ENCODE measurements at regions of chr9 and their contacts with region 1.

Region 1: GRCh38 chr9:129835021-129835871 is at the starts of genes C9orf78 and USP20:
- DNase-seq: peak; percentile 95 to 99 (median 98)
- ATAC-seq: peak; percentile 98
- H3K4me3 ChIP-seq: peak within 1 kb of the TSS; percentile 96
- H3K4me3 Mint-ChIP-seq: peak within 1 kb of the TSS; percentile 86 to 99 (median 98)
- H3K27ac ChIP-seq: peak within 1 kb of the TSS; percentile 97
- H3K27ac Mint-ChIP-seq: peak within 1 kb of the TSS; percentile 91 to 99 (median 98)
- H3K4me1 ChIP-seq: peaks cover 36 to 50% of the 10 kb centered on the region in 2 donors
- H3K4me1 Mint-ChIP-seq: peaks cover 41 to 65% (median 57%) of the 10 kb centered on the region in 7 donors
- H3K27me3 ChIP-seq: no peaks in the 10 kb centered on the region
- H3K27me3 Mint-ChIP-seq: no peaks in the 10 kb centered on the region
- total RNA-seq, gene C9orf78: 66.2 to 118 (median 95.8) TPM
- total RNA-seq, gene USP20: 94.9 to 156 (median 118) TPM

Region 2: GRCh38 chr9:128103589-128103962 is 1731.7 kb before region 1 on chr9:
- CTCF ChIA-PET with region 1: no interaction called
- POLR2A ChIA-PET with region 1: no interaction called
- intact Hi-C with region 1: no loop called
- DNase-seq: peak in 7 of 9 donors; percentile 27 to 52 (median 50)
- ATAC-seq: peak; percentile 77
- H3K4me3 ChIP-seq: no peak overlapping the region
- H3K4me3 Mint-ChIP-seq: peak overlapping the region in 7 of 10 donors; percentile 5 to 56 (median 36)
- H3K27ac ChIP-seq: peak overlapping the region; percentile 3
- H3K27ac Mint-ChIP-seq: peak overlapping the region in 8 of 9 donors; percentile 60 to 89 (median 74)
- H3K4me1 ChIP-seq: peaks cover 6 to 41% of the 10 kb centered on the region in 2 donors
- H3K4me1 Mint-ChIP-seq: peaks cover 36 to 68% (median 46%) of the 10 kb centered on the region in 7 donors
- H3K27me3 ChIP-seq: no peaks in the 10 kb centered on the region
- H3K27me3 Mint-ChIP-seq: no peaks in the 10 kb centered on the region

Region 3: GRCh38 chr9:129383561-129384416 is 451.5 kb before region 1 on chr9:
- CTCF ChIA-PET with region 1: no interaction called
- POLR2A ChIA-PET with region 1: no interaction called
- intact Hi-C with region 1: no loop called
- DNase-seq: peak; percentile 60 to 87 (median 79)
- ATAC-seq: peak; percentile 96
- H3K4me3 ChIP-seq: peak overlapping the region; percentile 62
- H3K4me3 Mint-ChIP-seq: peak overlapping the region; percentile 70 to 86 (median 82)
- H3K27ac ChIP-seq: peak overlapping the region; percentile 82
- H3K27ac Mint-ChIP-seq: peak overlapping the region; percentile 72 to 96 (median 92)
- H3K4me1 ChIP-seq: peaks cover 0 to 12% of the 10 kb centered on the region in 2 donors
- H3K4me1 Mint-ChIP-seq: peaks cover 8 to 19% (median 10%) of the 10 kb centered on the region in 7 donors
- H3K27me3 ChIP-seq: no peaks in the 10 kb centered on the region
- H3K27me3 Mint-ChIP-seq: peaks cover 0 to 9% (median 0%) of the 10 kb centered on the region in 5 donors

Region 4: DNA sequence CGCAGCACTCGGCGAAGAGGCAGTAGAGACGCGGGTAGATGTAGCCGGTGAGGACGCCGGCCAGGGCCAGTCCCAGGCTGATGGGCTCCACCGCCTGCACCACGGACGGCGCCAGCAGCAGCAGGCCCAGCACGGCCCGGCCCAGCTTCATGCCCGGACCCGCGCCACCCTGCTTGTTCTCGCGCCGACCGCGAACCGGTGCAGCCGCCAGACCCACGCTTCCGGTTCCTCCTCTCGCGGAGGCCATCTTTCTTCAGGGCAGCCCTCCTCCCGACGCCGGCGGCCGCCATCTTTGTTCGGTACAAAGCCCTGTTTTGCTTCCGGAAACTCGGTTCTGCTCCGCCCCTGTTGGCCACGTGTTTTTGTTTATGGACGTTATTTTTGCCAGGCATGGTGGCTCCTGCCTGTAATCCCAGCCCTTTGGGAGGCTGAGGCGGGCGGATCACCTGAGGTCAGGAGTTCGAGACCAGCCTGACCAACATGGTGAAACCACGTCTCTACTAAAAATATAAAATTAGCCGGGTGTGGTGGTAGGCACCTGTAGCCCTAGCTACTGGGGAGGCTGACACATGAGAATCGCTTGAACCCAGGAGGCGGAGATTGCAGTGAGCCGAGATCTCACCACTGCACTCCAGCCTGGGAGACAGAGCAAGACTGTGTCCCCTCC is 11.2 kb before region 1 on chr9 and contains the start of gene TOR1A:
- CTCF ChIA-PET with region 1: interaction called, 3 read pairs
- POLR2A ChIA-PET with region 1: interaction called, 56 read pairs
- intact Hi-C with region 1: loop called (anchors 1 kb)
- DNase-seq: peak; percentile 76 to 91 (median 89)
- ATAC-seq: peak; percentile 97
- H3K4me3 ChIP-seq: peak within 1 kb of the TSS; percentile 73
- H3K4me3 Mint-ChIP-seq: peak within 1 kb of the TSS; percentile 83 to 93 (median 90)
- H3K27ac ChIP-seq: peak within 1 kb of the TSS; percentile 78
- H3K27ac Mint-ChIP-seq: peak within 1 kb of the TSS; percentile 65 to 94 (median 84)
- H3K4me1 ChIP-seq: peaks cover 0 to 9% of the 10 kb centered on the region in 2 donors
- H3K4me1 Mint-ChIP-seq: peaks cover 5 to 17% (median 11%) of the 10 kb centered on the region in 7 donors
- H3K27me3 ChIP-seq: no peaks in the 10 kb centered on the region
- H3K27me3 Mint-ChIP-seq: no peaks in the 10 kb centered on the region
- total RNA-seq, gene TOR1A: 13.8 to 52.9 (median 34.7) TPM

Region 5: DNA sequence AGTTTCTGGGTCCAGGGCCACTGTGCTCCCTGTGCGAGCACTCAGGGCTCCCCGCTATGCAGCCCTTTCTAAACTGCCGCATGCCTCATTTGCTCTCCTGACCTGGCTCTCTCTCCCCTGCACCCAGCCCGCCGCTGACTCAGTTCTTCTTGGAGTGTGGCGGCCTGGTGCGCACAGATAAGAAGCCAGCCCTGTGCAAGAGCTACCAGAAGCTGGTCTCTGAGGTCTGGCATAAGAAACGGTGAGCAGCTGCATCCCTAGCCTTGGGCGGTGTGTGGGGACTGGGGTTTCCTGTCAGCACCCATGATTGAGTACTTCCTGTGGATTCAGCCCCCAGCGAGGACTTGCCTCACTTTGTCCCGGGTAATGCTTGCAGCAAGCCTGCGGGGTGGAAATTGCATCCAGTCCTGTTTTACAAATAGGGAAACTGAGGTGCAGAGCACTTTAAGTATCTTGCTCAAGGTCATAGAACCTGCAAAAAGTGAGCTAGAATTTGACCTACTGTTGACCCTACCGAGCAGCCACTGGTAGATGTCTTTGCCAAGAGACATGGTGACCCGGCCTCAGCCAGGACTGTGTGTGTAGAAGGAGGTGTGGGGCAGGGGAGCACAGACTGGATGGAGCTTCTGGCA is 27.9 kb after region 1 on chr9:
- CTCF ChIA-PET with region 1: interaction called, 3 read pairs
- POLR2A ChIA-PET with region 1: interaction called, 162 read pairs
- intact Hi-C with region 1: loop called in 1 of 2 experiments (anchors 1 kb)
- DNase-seq: peak in 8 of 9 donors; percentile 45 to 72 (median 53)
- ATAC-seq: peak; percentile 64
- H3K4me3 ChIP-seq: peak overlapping the region; percentile 30
- H3K4me3 Mint-ChIP-seq: peak overlapping the region; percentile 22 to 79 (median 71)
- H3K27ac ChIP-seq: peak overlapping the region; percentile 60
- H3K27ac Mint-ChIP-seq: peak overlapping the region; percentile 84 to 97 (median 93)
- H3K4me1 ChIP-seq: peaks cover 56 to 78% of the 10 kb centered on the region in 2 donors
- H3K4me1 Mint-ChIP-seq: peaks cover 40 to 72% (median 63%) of the 10 kb centered on the region in 7 donors
- H3K27me3 ChIP-seq: no peaks in the 10 kb centered on the region
- H3K27me3 Mint-ChIP-seq: no peaks in the 10 kb centered on the region

Region 6: DNA sequence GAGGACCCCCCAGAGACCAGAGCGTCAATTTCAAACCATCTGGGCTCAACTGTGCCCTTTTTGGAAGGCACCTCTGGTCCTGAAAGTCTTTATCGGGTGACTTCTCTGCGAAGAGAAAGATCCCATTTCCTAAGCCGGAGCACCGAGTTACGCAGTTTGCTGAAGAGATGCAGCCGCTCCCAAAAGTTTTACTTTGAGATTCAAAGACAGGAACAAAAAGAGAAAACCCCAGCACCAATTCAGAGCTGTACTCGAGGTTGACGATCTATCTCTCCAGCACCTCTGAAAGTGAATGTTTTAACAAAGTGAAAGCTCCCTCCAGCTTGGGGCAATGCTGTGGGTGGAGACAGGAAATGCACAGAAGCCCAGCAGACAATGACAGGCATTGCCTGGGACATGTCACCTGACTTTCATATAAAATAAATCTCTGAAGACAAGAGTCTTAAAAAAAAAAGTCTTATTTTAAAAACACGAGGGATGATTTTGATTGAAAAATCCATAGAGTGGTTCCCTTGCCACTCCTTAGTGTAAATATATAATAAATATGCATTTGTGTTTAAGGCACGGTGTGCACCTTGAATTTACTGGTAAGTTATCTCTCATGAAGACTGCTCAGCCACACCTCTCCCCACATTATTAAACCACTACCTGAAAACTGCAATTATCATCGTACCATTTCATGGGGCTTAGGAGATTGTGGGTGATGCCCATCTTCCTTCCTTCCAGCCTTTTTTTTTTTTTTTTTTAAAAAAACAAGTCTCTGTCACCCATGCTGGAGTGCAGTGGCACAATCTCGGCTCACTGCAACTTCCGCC is 127.8 kb after region 1 on chr9:
- CTCF ChIA-PET with region 1: no interaction called
- POLR2A ChIA-PET with region 1: interaction called, 4 read pairs
- intact Hi-C with region 1: loop called (anchors 2 to 5 kb)
- DNase-seq: peak; percentile 23 to 92 (median 87)
- ATAC-seq: peak; percentile 98
- H3K4me3 ChIP-seq: peak overlapping the region; percentile 80
- H3K4me3 Mint-ChIP-seq: peak overlapping the region; percentile 66 to 95 (median 88)
- H3K27ac ChIP-seq: peak overlapping the region; percentile 92
- H3K27ac Mint-ChIP-seq: peak overlapping the region; percentile 89 to 99 (median 97)
- H3K4me1 ChIP-seq: peaks cover 34 to 47% of the 10 kb centered on the region in 2 donors
- H3K4me1 Mint-ChIP-seq: peaks cover 54 to 80% (median 67%) of the 10 kb centered on the region in 7 donors
- H3K27me3 ChIP-seq: no peaks in the 10 kb centered on the region
- H3K27me3 Mint-ChIP-seq: no peaks in the 10 kb centered on the region